Naive thymus-derived CD4-positive, alpha-beta T cell (primary cell): ENCODE measurements at regions of chr11 and their contacts with region 1.

Region 1: DNA sequence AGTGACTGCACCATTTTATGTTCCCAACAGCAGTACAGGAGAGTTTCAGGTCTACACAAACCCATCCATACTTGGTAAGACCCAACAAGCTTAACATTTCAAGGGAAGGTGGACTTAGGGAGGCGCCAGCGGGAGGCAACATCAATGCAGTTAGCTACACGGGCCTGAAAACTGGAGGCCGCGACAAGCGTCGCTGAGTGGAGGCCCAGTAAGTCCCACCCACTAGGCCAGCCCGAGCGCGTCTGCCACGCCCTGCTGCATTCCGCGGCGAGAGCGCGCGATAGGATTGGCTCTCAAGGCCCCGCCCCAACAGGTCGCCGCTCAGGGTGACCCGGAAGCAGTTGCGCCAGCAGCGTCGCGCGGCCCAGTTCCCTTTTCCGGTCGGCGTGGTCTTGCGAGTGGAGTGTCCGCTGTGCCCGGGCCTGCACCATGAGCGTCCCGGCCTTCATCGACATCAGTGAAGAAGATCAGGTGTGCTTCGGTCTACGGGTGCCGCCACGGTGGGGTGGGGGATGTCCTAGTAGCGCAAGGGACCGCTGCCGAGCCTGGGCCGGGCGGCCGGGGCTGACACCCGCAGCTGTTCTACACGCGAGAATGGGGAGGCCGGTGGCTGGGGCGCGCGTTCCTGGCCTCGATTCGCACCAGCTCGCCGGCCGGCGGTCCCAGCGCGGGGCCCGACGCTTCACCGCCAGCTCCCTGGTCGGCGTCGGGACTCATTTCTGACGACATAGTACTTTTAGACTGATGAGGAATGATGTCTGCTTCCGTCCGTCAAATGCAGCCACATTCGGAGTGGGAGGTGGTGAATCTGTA is at the start of gene EIF3M:
- DNase-seq: peak; percentile 90 to 95 (median 94)
- ATAC-seq: peak; percentile 100
- H3K4me3 ChIP-seq: peak within 1 kb of the TSS; percentile 87
- H3K4me3 Mint-ChIP-seq: peak within 1 kb of the TSS; percentile 93 to 99 (median 97)
- H3K27ac ChIP-seq: peak within 1 kb of the TSS; percentile 96
- H3K27ac Mint-ChIP-seq: peak within 1 kb of the TSS; percentile 94 to 99 (median 97)
- H3K4me1 ChIP-seq: peaks cover 27 to 28% of the 10 kb centered on the region in 2 donors
- H3K4me1 Mint-ChIP-seq: peaks cover 25 to 52% (median 44%) of the 10 kb centered on the region in 7 donors
- H3K27me3 ChIP-seq: no peaks in the 10 kb centered on the region
- H3K27me3 Mint-ChIP-seq: no peaks in the 10 kb centered on the region
- total RNA-seq, gene EIF3M: 210 to 250 (median 236) TPM

Region 2: GRCh38 chr11:31369348-31370329 is 1214.0 kb before region 1 on chr11 and contains the starts of genes DCDC1 and DNAJC24:
- CTCF ChIA-PET with region 1: no interaction called
- POLR2A ChIA-PET with region 1: interaction called, 5 read pairs
- intact Hi-C with region 1: loop called (anchors 1 kb)
- DNase-seq: peak; percentile 84 to 90 (median 89)
- ATAC-seq: peak; percentile 99
- H3K4me3 ChIP-seq: peak within 1 kb of the TSS; percentile 96
- H3K4me3 Mint-ChIP-seq: peak within 1 kb of the TSS; percentile 93 to 100 (median 98)
- H3K27ac ChIP-seq: peak within 1 kb of the TSS; percentile 81
- H3K27ac Mint-ChIP-seq: peak within 1 kb of the TSS; percentile 90 to 97 (median 95)
- H3K4me1 ChIP-seq: peaks cover 21 to 31% of the 10 kb centered on the region in 2 donors
- H3K4me1 Mint-ChIP-seq: peaks cover 28 to 82% (median 66%) of the 10 kb centered on the region in 7 donors
- H3K27me3 ChIP-seq: no peaks in the 10 kb centered on the region
- H3K27me3 Mint-ChIP-seq: peaks cover 0 to 18% (median 0%) of the 10 kb centered on the region in 5 donors
- total RNA-seq, gene DCDC1: 0.13 to 0.81 (median 0.26) TPM in 4 of 5 experiments, not detected in the other
- total RNA-seq, gene DNAJC24: 12.2 to 26.3 (median 18.6) TPM

Region 3: GRCh38 chr11:32090545-32091373 is 492.9 kb before region 1 on chr11 and contains the start of gene RCN1:
- CTCF ChIA-PET with region 1: no interaction called
- POLR2A ChIA-PET with region 1: no interaction called
- intact Hi-C with region 1: loop called (anchors 2 to 5 kb)
- DNase-seq: peak in 3 of 9 donors; percentile 14 to 64 (median 54)
- ATAC-seq: peak; percentile 66
- H3K4me3 ChIP-seq: peak within 1 kb of the TSS; percentile 83
- H3K4me3 Mint-ChIP-seq: peak within 1 kb of the TSS; percentile 74 to 89 (median 84)
- H3K27ac ChIP-seq: peak within 1 kb of the TSS; percentile 81
- H3K27ac Mint-ChIP-seq: peak within 1 kb of the TSS; percentile 74 to 90 (median 83)
- H3K4me1 ChIP-seq: peaks cover 4 to 8% of the 10 kb centered on the region in 2 donors
- H3K4me1 Mint-ChIP-seq: peaks cover 12 to 36% (median 24%) of the 10 kb centered on the region in 7 donors
- H3K27me3 ChIP-seq: peaks cover 0 to 4% of the 10 kb centered on the region in 2 donors
- H3K27me3 Mint-ChIP-seq: peaks cover 5 to 19% (median 16%) of the 10 kb centered on the region in 5 donors
- total RNA-seq, gene RCN1: 5.5 to 26.8 (median 9.6) TPM

Region 4: GRCh38 chr11:32602657-32603415 is 19.2 kb after region 1 on chr11:
- CTCF ChIA-PET with region 1: no interaction called
- POLR2A ChIA-PET with region 1: interaction called, 4 read pairs
- intact Hi-C with region 1: loop called in 1 of 2 experiments (anchors 2 kb)
- DNase-seq: no peak
- ATAC-seq: no peak
- H3K4me3 ChIP-seq: no peak overlapping the region
- H3K4me3 Mint-ChIP-seq: no peak overlapping the region
- H3K27ac ChIP-seq: no peak overlapping the region
- H3K27ac Mint-ChIP-seq: peak overlapping the region in 2 of 9 donors; percentile 10 to 34
- H3K4me1 ChIP-seq: no peaks in the 10 kb centered on the region
- H3K4me1 Mint-ChIP-seq: peaks cover 0 to 4% (median 0%) of the 10 kb centered on the region in 7 donors
- H3K27me3 ChIP-seq: no peaks in the 10 kb centered on the region
- H3K27me3 Mint-ChIP-seq: no peaks in the 10 kb centered on the region

Region 5: DNA sequence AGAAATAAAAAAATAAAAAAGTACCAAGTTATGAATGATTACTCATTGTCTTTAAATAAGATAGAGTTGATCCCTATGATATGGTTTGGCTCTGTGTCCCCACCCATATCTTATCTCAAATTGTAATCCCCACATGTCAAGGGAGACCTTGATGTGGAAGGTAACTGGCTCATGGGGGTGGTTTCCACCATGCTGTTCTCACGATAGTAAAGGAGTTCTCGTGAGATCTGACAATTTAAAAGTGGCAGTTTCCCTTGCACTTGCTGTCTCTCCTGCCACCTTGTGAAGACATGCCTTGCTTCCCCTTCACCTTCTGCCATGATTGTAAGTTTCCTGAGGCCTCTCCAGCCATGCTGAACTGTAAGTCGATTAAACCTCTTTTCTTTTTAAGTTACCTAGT is 327.7 kb after region 1 on chr11:
- CTCF ChIA-PET with region 1: no interaction called
- POLR2A ChIA-PET with region 1: no interaction called
- intact Hi-C with region 1: no loop called
- DNase-seq: no peak
- ATAC-seq: no peak
- H3K4me3 ChIP-seq: no peak overlapping the region
- H3K4me3 Mint-ChIP-seq: no peak overlapping the region
- H3K27ac ChIP-seq: no peak overlapping the region
- H3K27ac Mint-ChIP-seq: no peak overlapping the region
- H3K4me1 ChIP-seq: no peaks in the 10 kb centered on the region
- H3K4me1 Mint-ChIP-seq: peaks cover 4 to 41% (median 32%) of the 10 kb centered on the region in 7 donors
- H3K27me3 ChIP-seq: no peaks in the 10 kb centered on the region
- H3K27me3 Mint-ChIP-seq: no peaks in the 10 kb centered on the region

Region 6: DNA sequence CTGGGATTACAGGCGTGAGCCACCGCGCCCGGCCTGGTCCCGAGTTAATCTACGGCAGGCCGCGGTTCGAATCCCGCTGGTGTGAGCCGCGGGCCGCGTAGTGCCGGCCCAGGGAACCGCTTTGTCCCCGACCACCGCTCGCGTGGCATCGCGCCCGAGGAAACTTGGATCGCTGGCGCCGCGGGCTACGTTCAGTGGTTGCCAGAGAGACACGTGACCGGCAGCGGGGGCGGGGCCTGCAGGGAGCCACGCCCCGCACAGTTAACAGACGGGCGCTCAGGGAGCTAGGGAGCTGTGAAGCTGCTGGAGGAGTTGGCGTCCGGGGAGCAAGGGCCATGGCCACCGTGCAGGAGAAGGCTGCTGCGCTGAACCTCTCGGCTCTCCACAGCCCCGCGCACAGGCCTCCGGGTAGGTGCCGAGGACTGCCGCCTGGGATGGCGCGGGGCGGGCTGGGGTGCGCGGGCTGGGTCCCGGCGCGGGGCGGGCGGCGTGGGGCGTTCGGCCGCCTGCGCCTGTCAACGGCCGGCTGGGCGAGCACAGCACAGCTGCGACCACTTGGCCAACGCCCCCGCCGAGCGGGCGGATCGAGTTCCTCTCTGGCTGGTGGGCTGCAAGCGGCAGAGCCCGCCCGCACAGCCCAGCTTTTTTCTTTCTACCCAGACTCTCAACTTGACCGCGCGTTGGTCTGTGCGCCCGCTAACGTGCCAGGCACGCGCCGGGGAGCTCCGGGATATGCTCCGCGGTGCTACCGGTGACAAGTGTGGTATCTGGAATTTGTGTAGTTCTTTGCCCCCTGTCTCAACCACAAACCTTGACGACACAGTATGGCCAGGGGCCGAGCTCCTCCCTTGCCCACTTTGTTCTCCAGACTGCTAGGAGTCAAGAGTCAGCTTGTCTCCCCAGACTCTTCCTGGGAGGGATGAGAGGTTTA is 432.2 kb after region 1 on chr11 and contains the start of gene DEPDC7:
- CTCF ChIA-PET with region 1: no interaction called
- POLR2A ChIA-PET with region 1: no interaction called
- intact Hi-C with region 1: loop called in 1 of 2 experiments (anchors 5 kb)
- DNase-seq: peak; percentile 72 to 84 (median 81)
- ATAC-seq: peak; percentile 90
- H3K4me3 ChIP-seq: peak within 1 kb of the TSS; percentile 65
- H3K4me3 Mint-ChIP-seq: peak within 1 kb of the TSS; percentile 86 to 93 (median 90)
- H3K27ac ChIP-seq: peak within 1 kb of the TSS; percentile 50
- H3K27ac Mint-ChIP-seq: peak within 1 kb of the TSS in 6 of 9 donors; percentile 63 to 77 (median 69)
- H3K4me1 ChIP-seq: peaks cover 14 to 23% of the 10 kb centered on the region in 2 donors
- H3K4me1 Mint-ChIP-seq: peaks cover 14 to 73% (median 58%) of the 10 kb centered on the region in 7 donors
- H3K27me3 ChIP-seq: peaks cover 0 to 7% of the 10 kb centered on the region in 2 donors
- H3K27me3 Mint-ChIP-seq: peaks cover 0 to 74% (median 5%) of the 10 kb centered on the region in 5 donors
- total RNA-seq, gene DEPDC7: 0.65 to 9.6 (median 2.1) TPM

Region 7: DNA sequence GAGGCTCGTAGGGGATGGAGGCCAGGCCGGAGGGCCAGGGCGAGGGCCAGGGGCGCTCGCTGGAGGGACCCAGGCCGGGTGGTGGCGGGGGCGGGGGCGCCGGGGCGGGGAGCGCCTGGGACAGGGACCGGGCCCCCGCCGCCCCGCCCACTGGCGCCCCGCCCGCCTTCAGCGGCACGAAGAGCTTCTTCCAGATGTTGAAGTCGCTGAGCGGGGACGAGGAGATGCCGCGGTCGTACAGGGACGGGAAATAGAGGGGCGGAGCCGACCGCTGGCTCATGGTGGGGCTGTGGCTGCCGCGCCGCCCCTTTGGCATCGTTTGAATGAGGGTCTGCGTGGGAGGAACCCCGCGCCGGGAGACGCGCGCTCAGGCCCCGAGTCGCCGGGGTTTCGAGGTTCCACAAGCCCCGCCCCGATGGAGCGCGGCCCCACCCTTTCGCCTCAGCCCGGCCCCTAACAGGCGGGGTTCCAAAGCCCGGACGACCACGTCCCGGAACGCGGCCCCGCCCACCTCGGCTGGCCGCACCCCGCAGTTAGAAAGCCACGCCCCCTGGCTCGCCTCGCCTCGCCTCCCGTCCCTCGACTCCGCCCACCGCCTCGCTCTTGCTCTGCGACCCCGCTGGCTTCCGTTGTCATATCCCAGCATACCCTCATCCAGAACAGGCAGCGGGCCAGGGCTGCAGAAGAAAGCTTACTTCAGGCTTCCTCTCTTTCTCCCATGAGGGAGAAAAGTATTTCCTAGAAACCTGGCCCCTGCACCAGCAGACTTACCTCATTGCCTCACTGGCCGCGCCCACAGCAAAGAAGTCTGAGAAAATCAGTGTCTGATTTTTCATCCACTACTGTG is 1117.0 kb after region 1 on chr11 and contains the start of gene C11orf91:
- CTCF ChIA-PET with region 1: no interaction called
- POLR2A ChIA-PET with region 1: no interaction called
- intact Hi-C with region 1: loop called (anchors 1 to 2 kb)
- DNase-seq: peak; percentile 88 to 98 (median 95)
- ATAC-seq: peak; percentile 99
- H3K4me3 ChIP-seq: peak within 1 kb of the TSS; percentile 54
- H3K4me3 Mint-ChIP-seq: peak within 1 kb of the TSS; percentile 84 to 96 (median 92)
- H3K27ac ChIP-seq: no peak within 1 kb of the TSS
- H3K27ac Mint-ChIP-seq: peak within 1 kb of the TSS; percentile 61 to 84 (median 76)
- H3K4me1 ChIP-seq: peaks cover 9 to 13% of the 10 kb centered on the region in 2 donors
- H3K4me1 Mint-ChIP-seq: peaks cover 14 to 27% (median 23%) of the 10 kb centered on the region in 7 donors
- H3K27me3 ChIP-seq: no peaks in the 10 kb centered on the region
- H3K27me3 Mint-ChIP-seq: peaks cover 0 to 31% (median 5%) of the 10 kb centered on the region in 5 donors
- total RNA-seq, gene C11orf91: not detected

Region 8: GRCh38 chr11:34438529-34439507 is 1855.2 kb after region 1 on chr11 and contains the start of gene CAT:
- CTCF ChIA-PET with region 1: no interaction called
- POLR2A ChIA-PET with region 1: no interaction called
- intact Hi-C with region 1: loop called (anchors 10 kb)
- DNase-seq: peak; percentile 94 to 98 (median 97)
- ATAC-seq: peak; percentile 98
- H3K4me3 ChIP-seq: peak within 1 kb of the TSS; percentile 90
- H3K4me3 Mint-ChIP-seq: peak within 1 kb of the TSS; percentile 88 to 98 (median 96)
- H3K27ac ChIP-seq: peak within 1 kb of the TSS; percentile 79
- H3K27ac Mint-ChIP-seq: peak within 1 kb of the TSS; percentile 89 to 97 (median 93)
- H3K4me1 ChIP-seq: peaks cover 7 to 19% of the 10 kb centered on the region in 2 donors
- H3K4me1 Mint-ChIP-seq: peaks cover 21 to 47% (median 35%) of the 10 kb centered on the region in 7 donors
- H3K27me3 ChIP-seq: no peaks in the 10 kb centered on the region
- H3K27me3 Mint-ChIP-seq: no peaks in the 10 kb centered on the region
- total RNA-seq, gene CAT: 23.3 to 55.9 (median 42.6) TPM